ENCODE measurements at regions of chr6 and their contacts with region 1.

Region 1: DNA sequence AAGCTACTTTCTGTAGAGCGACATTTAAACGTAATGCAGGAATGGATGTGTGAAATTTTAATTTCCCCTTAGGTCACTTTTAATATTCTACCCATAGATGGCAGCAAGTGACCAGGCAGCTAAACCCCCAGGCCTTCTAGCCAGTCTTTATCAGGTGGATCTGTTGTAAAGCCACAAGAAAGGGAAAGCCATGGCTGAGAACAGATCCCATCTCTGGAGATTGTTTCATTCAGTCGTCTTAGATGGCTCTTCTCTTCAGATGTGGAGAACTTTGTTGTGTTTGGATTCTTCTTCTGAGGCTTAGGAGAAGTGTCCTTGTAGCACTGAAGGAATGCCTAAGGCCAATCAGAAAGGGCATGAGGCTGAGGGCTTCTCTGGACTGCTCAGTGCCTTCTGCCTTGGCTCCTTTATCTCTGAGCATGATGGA is 15.8 kb upstream of the RNF182 start:
- DNase-seq: no peak
- H3K4me3 ChIP-seq: no peak overlapping the region
- H3K27ac ChIP-seq: no peak overlapping the region
- H3K4me1 ChIP-seq: peaks cover 0 to 5% (median 0%) of the 10 kb centered on the region in 6 donors
- H3K27me3 ChIP-seq: peaks cover 0 to 43% (median 0%) of the 10 kb centered on the region in 7 donors
- CTCF ChIP-seq: peak; percentile 43 to 78 (median 65)
- POLR2A ChIP-seq: no peak

Region 2: DNA sequence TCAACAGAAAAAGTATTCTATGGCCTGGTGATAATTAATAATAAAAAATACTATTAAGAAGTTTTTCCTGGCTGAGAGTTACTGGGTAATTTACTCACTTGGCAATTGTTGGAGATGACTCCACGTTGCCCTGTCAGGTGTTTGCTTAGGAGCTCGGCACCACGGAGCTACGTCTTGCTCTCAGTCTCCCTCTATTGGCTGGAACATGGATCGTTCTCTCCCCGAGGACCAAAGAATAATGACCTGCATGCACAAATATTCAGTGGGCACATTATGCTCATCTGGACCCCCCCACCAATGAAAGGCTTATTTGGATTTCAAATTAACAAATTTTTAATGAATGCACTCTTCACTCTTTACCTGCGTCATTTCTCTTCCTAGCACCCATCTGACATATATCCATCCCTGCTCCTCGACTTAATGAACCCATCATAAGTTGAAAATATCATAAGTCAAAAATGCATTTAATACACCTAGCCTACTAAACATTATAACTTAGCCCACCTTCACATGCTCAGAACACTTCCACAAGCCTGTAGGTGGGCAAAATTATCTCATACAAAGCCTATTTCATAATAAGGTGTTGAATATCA is 137.6 kb after region 1 on chr6:
- intact Hi-C with region 1: loop called (anchors 10 kb)
- DNase-seq: no peak
- H3K4me3 ChIP-seq: no peak overlapping the region
- H3K27ac ChIP-seq: no peak overlapping the region
- H3K4me1 ChIP-seq: peaks cover 0 to 4% (median 0%) of the 10 kb centered on the region in 6 donors
- H3K27me3 ChIP-seq: peaks cover 0 to 28% (median 0%) of the 10 kb centered on the region in 7 donors
- CTCF ChIP-seq: peak in 9 of 11 experiments; percentile 31 to 72 (median 59)
- POLR2A ChIP-seq: no peak

Region 3: DNA sequence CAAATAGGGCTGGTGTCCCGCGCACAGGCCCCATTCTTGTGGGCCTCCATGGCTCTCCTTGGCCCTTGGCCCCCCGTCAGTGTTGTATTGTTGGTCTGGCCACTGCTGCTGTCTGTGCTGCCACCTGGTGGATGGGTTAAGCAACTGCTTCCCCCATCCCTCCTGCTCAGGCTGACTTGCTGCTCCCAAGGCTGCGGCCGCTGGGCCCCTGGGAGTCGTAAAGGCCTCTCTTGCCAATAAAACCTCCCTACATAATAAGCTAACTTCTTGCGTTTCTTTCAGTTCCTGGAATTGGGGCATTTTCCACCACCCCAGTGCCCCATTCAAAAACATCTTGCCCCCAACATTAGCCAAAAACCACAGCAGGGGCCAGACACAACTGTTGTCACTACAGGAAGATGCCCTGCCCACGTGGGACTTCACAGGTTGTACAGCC is 235.7 kb after region 1 on chr6:
- intact Hi-C with region 1: loop called (anchors 5 kb)
- DNase-seq: peak; percentile 91
- H3K4me3 ChIP-seq: no peak overlapping the region
- H3K27ac ChIP-seq: no peak overlapping the region
- H3K4me1 ChIP-seq: peaks cover 0 to 47% (median 10%) of the 10 kb centered on the region in 6 donors
- H3K27me3 ChIP-seq: no peaks in the 10 kb centered on the region
- CTCF ChIP-seq: peak; percentile 83 to 97 (median 93)
- POLR2A ChIP-seq: no peak

Measured in spleen (tissue), 13 donors.